GM12878 (cell line): ENCODE measurements at regions of chr7 and their contacts with region 1.

Region 1: GRCh38 chr7:136359333-136359903 is 382.3 kb upstream of the MTPN start:
- DNase-seq: peak; percentile 84
- ATAC-seq: peak; percentile 97
- H3K4me3 ChIP-seq: no peak overlapping the region
- H3K27ac ChIP-seq: no peak overlapping the region; the same call in 1 of the 2 replicates
- H3K4me1 ChIP-seq: peaks cover 9% of the 10 kb centered on the region; the same call in 1 of the 2 replicates
- H3K27me3 ChIP-seq: no peaks in the 10 kb centered on the region
- CTCF ChIP-seq: no peak
- EP300 ChIP-seq: peak; percentile 77 to 88
- POLR2A ChIP-seq: no peak
- RAD21 ChIP-seq: no peak

Region 2: GRCh38 chr7:136030862-136031318 is 328.5 kb before region 1 on chr7:
- CTCF ChIA-PET with region 1: no interaction called
- POLR2A ChIA-PET with region 1: no interaction called
- RAD21 ChIA-PET with region 1: no interaction called
- SMC1A ChIA-PET with region 1: no interaction called
- in situ Hi-C with region 1: no loop called
- intact Hi-C with region 1: loop called (anchors 5 kb)
- DNase-seq: peak; percentile 37
- ATAC-seq: peak; percentile 91
- H3K4me3 ChIP-seq: no peak overlapping the region
- H3K27ac ChIP-seq: no peak overlapping the region
- H3K4me1 ChIP-seq: peaks cover 4% of the 10 kb centered on the region
- H3K27me3 ChIP-seq: no peaks in the 10 kb centered on the region
- CTCF ChIP-seq: no peak
- EP300 ChIP-seq: peak in 1 of 2 experiments; percentile 63; a peak in 1 of 4 replicates
- POLR2A ChIP-seq: no peak
- RAD21 ChIP-seq: no peak

Region 3: DNA sequence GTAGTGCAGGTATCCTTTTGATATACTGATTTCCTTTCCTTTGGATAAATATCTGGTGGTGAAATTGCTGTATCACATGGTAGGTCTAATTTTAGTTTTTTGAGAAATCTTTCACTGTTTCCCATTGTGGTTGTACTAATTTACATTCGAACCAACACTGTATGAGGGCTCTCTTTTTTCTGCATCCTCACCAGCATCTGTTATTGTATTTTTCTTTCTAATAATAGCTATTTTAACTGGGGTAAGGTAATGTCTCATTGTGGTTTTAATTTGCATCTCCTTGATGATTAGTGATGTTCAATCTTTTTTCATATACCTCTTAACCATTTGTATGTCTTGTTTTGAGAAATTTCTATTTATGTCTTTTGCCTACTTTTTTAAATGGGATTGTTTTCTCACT is 46.8 kb before region 1 on chr7:
- CTCF ChIA-PET with region 1: no interaction called
- POLR2A ChIA-PET with region 1: no interaction called
- RAD21 ChIA-PET with region 1: no interaction called
- SMC1A ChIA-PET with region 1: no interaction called
- in situ Hi-C with region 1: no loop called
- intact Hi-C with region 1: loop called (anchors 1 kb)
- DNase-seq: no peak
- ATAC-seq: peak; percentile 38; the same call in 2 of the 3 replicates
- H3K4me3 ChIP-seq: no peak overlapping the region
- H3K27ac ChIP-seq: no peak overlapping the region
- H3K4me1 ChIP-seq: no peaks in the 10 kb centered on the region
- H3K27me3 ChIP-seq: no peaks in the 10 kb centered on the region
- CTCF ChIP-seq: no peak
- EP300 ChIP-seq: no peak
- POLR2A ChIP-seq: no peak
- RAD21 ChIP-seq: no peak